Caco-2 (cell line): ENCODE measurements at regions of chr4 and their contacts with region 1.

Region 1: DNA sequence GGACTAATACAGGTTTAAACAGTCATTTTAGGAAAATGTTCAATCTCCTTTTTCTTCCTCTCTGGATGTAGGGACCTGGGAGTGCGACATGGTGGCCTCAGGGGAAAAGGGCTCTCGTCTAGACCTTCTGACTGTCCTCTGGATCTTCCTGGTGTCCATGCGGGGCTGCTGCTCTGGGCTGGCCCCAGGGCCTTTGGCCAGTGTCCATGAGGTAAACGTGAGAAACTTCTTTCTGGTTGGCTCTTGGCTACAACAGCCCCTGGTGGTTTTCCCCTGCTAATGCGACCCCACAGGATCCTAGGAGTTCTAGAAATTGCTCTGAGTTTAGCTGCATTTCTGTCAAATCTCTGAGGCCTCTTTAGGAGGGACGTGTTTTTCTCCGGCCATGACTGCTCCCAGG is 85.7 kb downstream of the MFAP3L start:
- DNase-seq: peak in 1 of 2 experiments; percentile 11
- H3K4me3 ChIP-seq: no peak overlapping the region
- H3K4me3 Mint-ChIP-seq: no peak overlapping the region
- H3K27ac Mint-ChIP-seq: no peak overlapping the region
- H3K4me1 ChIP-seq: peaks cover 20% of the 10 kb centered on the region
- H3K4me1 Mint-ChIP-seq: peaks cover 18% of the 10 kb centered on the region
- H3K27me3 ChIP-seq: no peaks in the 10 kb centered on the region
- H3K27me3 Mint-ChIP-seq: no peaks in the 10 kb centered on the region
- CTCF ChIP-seq: no peak

Region 2: DNA sequence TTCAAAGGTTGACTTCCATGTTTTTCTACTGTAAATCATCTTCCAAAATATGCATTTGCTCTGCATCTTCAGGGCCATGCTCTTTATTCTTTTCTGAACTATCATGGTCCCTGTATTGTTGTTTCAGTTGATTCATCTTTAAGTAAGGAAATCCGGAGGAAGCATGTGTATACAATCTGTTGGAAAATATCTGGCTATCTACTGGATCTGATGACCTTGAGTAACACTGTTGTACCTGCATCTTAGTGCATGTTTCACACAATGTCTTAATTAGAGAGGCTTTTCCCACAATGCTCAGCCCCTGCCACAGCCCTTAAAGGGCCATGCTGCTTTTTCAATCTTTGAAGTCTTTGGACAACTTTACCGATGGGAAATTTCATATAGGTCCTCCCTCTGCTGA is 607.9 kb before region 1 on chr4:
- CTCF ChIA-PET with region 1: no interaction called
- POLR2A ChIA-PET with region 1: no interaction called
- intact Hi-C with region 1: no loop called
- DNase-seq: no peak
- H3K4me3 ChIP-seq: no peak overlapping the region
- H3K4me3 Mint-ChIP-seq: no peak overlapping the region
- H3K27ac Mint-ChIP-seq: no peak overlapping the region
- H3K4me1 ChIP-seq: peaks cover 21% of the 10 kb centered on the region
- H3K4me1 Mint-ChIP-seq: peaks cover 32% of the 10 kb centered on the region
- H3K27me3 ChIP-seq: no peaks in the 10 kb centered on the region
- H3K27me3 Mint-ChIP-seq: no peaks in the 10 kb centered on the region
- CTCF ChIP-seq: no peak

Region 3: GRCh38 chr4:169963998-169964397 is 23.5 kb after region 1 on chr4:
- CTCF ChIA-PET with region 1: no interaction called
- POLR2A ChIA-PET with region 1: no interaction called
- intact Hi-C with region 1: no loop called
- DNase-seq: no peak
- H3K4me3 ChIP-seq: no peak overlapping the region
- H3K4me3 Mint-ChIP-seq: no peak overlapping the region
- H3K27ac Mint-ChIP-seq: no peak overlapping the region
- H3K4me1 ChIP-seq: no peaks in the 10 kb centered on the region
- H3K4me1 Mint-ChIP-seq: peaks cover 6% of the 10 kb centered on the region
- H3K27me3 ChIP-seq: no peaks in the 10 kb centered on the region
- H3K27me3 Mint-ChIP-seq: no peaks in the 10 kb centered on the region
- CTCF ChIP-seq: no peak

Region 4: GRCh38 chr4:169975838-169976796 is 35.7 kb after region 1 on chr4:
- CTCF ChIA-PET with region 1: no interaction called
- POLR2A ChIA-PET with region 1: no interaction called
- intact Hi-C with region 1: loop called (anchors 5 kb)
- DNase-seq: peak; percentile 49 to 76
- H3K4me3 ChIP-seq: no peak overlapping the region
- H3K4me3 Mint-ChIP-seq: no peak overlapping the region
- H3K27ac Mint-ChIP-seq: no peak overlapping the region
- H3K4me1 ChIP-seq: peaks cover 24% of the 10 kb centered on the region
- H3K4me1 Mint-ChIP-seq: peaks cover 4% of the 10 kb centered on the region
- H3K27me3 ChIP-seq: no peaks in the 10 kb centered on the region
- H3K27me3 Mint-ChIP-seq: no peaks in the 10 kb centered on the region
- CTCF ChIP-seq: no peak